ENCODE measurements at regions of chr1 and their contacts with region 1.

Region 1: DNA sequence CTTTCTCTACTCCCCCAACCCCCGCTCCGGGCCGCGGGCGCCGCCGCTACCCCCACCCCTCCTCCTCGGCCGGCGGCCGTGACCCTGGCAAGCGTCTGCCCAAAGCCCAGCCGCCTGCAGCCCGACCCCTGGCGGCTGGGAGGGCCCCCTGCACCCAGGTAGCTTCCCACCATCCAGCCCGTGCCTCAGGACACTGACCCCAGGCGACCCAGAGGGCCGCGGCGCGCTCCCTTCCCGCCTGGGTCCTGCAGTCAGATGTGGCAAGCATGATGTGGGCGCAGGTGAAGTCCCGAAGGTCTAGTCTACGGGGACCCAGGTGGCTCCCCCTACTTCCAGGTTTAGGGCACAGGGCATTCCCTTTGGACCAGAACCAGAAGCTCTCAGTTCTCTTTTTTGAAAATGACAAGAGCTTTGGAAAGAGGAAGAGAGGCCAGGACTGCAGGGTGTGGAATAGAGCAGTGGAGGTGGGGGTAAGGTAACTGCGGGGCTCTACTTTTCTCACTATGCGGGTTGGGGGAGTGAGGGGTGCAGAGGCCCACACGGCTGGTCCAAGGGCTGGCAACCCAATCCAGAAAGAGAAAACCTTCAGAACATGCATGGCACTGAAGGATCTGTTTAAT is at the start of gene DENND4B:
- DNase-seq: peak; percentile 81 to 86
- ATAC-seq: peak; percentile 81
- total RNA-seq, gene DENND4B: 32.1 to 41.7 TPM

Region 2: GRCh38 chr1:152855661-152856060 is 1091.1 kb before region 1 on chr1:
- intact Hi-C with region 1: no loop called
- DNase-seq: no peak
- ATAC-seq: no peak

Region 3: GRCh38 chr1:153827168-153827964 is 119.4 kb before region 1 on chr1:
- intact Hi-C with region 1: loop called in 1 of 2 experiments (anchors 10 kb)
- DNase-seq: no peak
- ATAC-seq: no peak

Region 4: DNA sequence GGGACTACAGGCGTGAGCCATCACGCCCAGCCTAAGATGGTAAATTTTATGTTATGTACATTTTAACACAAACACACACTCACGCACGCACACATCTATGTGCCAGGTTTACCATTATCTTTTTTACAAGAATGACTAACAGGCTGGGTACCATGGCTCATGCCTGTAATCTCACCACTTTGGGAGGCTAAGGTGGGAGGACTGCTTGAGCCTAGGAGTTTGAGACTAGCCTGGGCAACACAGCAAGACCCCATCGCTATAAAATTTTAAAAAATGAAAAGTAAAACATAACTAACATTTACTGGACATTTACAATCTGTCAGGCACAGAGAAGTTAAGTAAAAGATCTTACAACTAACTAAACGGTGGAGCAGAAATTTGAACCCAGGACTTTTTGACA is 38.7 kb before region 1 on chr1:
- intact Hi-C with region 1: no loop called
- DNase-seq: no peak
- ATAC-seq: no peak

Region 5: GRCh38 chr1:154062309-154062708 is 115.6 kb after region 1 on chr1:
- intact Hi-C with region 1: no loop called
- DNase-seq: no peak
- ATAC-seq: no peak

Measured in left colon (tissue), 2 donors.